CD14-positive monocyte (primary cell): ENCODE measurements at regions of chr10 and their contacts with region 1.

Region 1: GRCh38 chr10:3043512-3044368 is 23.6 kb upstream of the PFKP start:
- DNase-seq: peak; percentile 36 to 55 (median 50)
- H3K4me3 ChIP-seq: no peak overlapping the region
- H3K4me3 Mint-ChIP-seq: peak overlapping the region in 1 of 2 donors; percentile 68
- H3K27ac ChIP-seq: no peak overlapping the region
- H3K27ac Mint-ChIP-seq: peak overlapping the region in 1 of 7 donors; percentile 61
- H3K4me1 ChIP-seq: peaks cover 5 to 21% of the 10 kb centered on the region in 2 donors
- H3K4me1 Mint-ChIP-seq: peaks cover 12% of the 10 kb centered on the region
- H3K27me3 ChIP-seq: no peaks in the 10 kb centered on the region
- H3K27me3 Mint-ChIP-seq: peaks cover 10 to 20% (median 11%) of the 10 kb centered on the region in 3 donors
- CTCF ChIP-seq: peak; percentile 73

Region 2: DNA sequence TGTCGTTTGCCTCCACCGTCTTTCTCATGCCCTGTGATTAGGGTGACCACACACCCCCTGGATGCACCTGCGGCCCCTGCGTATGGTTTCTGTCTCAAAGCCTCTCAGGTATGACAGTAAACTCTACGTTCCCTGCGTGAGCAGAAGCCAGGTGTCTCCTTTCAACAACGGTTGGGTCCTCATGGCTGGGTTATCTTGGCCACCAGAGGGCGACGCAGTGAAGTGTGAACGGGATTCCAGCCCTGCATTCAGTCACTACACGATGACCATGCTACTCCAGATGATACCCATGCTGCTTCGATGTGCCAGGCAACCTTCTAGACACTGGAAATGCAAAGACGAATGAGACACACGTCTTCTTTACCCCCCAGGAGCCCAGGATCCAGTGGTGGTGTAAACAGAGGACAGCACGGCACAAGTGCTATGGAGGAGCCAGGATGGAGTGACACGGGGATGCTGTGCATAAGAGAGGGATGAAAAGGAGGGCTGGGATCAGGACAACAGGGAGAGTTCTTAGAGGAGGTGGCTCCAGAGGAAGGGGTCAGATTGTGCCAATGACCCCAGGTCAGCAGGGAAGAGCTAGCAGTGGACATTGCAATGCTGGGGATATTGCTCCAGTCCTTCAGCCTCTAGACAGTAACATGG is 204.5 kb before region 1 on chr10:
- intact Hi-C with region 1: loop called (anchors 2 to 5 kb)
- DNase-seq: peak in 2 of 3 donors; percentile 12 to 20
- H3K4me3 ChIP-seq: no peak overlapping the region
- H3K4me3 Mint-ChIP-seq: no peak overlapping the region
- H3K27ac ChIP-seq: no peak overlapping the region
- H3K27ac Mint-ChIP-seq: peak overlapping the region in 1 of 7 donors; percentile 7
- H3K4me1 ChIP-seq: no peaks in the 10 kb centered on the region
- H3K4me1 Mint-ChIP-seq: no peaks in the 10 kb centered on the region
- H3K27me3 ChIP-seq: no peaks in the 10 kb centered on the region
- H3K27me3 Mint-ChIP-seq: peaks cover 0 to 6% (median 3%) of the 10 kb centered on the region in 3 donors
- CTCF ChIP-seq: peak; percentile 66

Region 3: DNA sequence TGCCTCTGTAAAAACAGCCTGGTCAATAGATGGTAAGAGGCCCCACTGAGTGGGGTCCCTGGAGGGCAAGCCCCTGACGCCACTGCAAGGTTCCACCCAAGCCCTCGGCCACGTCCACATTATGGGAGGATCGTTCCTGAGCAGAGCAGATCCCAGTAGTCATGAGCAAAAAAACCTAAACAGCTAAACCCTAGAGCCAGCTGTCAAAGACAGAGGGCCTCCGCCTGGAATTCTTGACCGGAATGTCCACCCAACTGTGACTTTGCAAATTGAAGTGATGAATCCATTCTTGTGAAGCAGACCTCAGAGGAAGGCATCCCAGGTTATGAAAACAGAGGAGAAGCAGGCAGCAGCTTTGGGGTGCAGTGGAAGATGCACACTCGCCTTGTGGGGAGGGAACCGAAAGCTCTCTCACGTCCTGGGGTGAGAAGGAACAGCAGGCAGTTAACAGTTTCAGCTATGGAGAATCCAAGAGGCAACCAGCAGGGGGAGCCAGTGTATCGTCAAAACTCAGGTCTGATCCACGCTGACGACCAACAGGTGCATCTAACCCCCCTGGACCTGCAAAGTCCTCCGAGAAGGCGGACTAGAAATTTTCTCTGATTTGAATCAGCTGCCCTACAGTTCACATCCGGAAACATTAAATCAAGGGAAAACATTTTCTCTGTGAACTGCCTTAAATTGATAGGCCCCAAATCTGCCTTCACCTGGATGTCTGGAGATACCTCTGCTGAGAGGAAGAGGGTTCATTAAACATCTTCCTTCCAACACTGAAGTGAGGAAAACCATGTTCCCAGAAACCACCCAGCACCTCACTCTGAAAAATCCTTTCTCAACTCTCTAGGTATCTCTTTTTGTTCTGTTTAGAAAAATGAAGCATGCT is 115.5 kb before region 1 on chr10:
- intact Hi-C with region 1: loop called (anchors 5 kb)
- DNase-seq: peak; percentile 30 to 55 (median 40)
- H3K4me3 ChIP-seq: no peak overlapping the region
- H3K4me3 Mint-ChIP-seq: no peak overlapping the region
- H3K27ac ChIP-seq: no peak overlapping the region
- H3K27ac Mint-ChIP-seq: no peak overlapping the region
- H3K4me1 ChIP-seq: peaks cover 0 to 14% of the 10 kb centered on the region in 2 donors
- H3K4me1 Mint-ChIP-seq: peaks cover 17% of the 10 kb centered on the region
- H3K27me3 ChIP-seq: no peaks in the 10 kb centered on the region
- H3K27me3 Mint-ChIP-seq: peaks cover 0 to 4% (median 2%) of the 10 kb centered on the region in 3 donors
- CTCF ChIP-seq: peak; percentile 67